ENCODE measurements at regions of chr12 and their contacts with region 1.

Region 1: DNA sequence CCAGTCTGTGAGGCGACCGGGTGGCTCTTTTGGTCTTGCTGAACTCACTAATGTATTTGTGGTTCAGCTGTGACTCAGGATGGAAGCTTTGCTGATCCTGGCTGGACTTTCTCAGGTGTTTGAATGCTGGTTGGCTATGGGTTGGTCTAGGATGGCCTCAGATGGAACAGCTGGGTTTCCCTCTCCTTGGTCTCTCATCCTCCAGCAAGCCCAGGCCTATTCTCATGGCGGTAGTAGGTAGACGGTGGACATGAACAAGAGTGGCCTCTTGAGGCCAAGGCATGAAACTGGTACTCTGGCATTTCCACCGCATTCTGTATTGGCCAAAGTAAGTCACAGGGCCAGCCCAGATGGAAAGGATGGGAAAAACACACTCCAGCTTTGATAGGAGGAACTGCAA is 11.8 kb upstream of the POLR3B start:
- DNase-seq: no peak

Region 2: GRCh38 chr12:105409801-105410471 is 935.8 kb before region 1 on chr12:
- intact Hi-C with region 1: loop called (anchors 10 kb)
- DNase-seq: no peak

Region 3: GRCh38 chr12:106223485-106224354 is 122.0 kb before region 1 on chr12:
- intact Hi-C with region 1: loop called (anchors 2 kb)
- DNase-seq: peak; percentile 91

Region 4: GRCh38 chr12:106247674-106248311 is 97.9 kb before region 1 on chr12 and contains the start of gene CKAP4:
- intact Hi-C with region 1: loop called (anchors 5 kb)
- DNase-seq: peak; percentile 91
- total RNA-seq, gene CKAP4: 56.8 TPM

Region 5: DNA sequence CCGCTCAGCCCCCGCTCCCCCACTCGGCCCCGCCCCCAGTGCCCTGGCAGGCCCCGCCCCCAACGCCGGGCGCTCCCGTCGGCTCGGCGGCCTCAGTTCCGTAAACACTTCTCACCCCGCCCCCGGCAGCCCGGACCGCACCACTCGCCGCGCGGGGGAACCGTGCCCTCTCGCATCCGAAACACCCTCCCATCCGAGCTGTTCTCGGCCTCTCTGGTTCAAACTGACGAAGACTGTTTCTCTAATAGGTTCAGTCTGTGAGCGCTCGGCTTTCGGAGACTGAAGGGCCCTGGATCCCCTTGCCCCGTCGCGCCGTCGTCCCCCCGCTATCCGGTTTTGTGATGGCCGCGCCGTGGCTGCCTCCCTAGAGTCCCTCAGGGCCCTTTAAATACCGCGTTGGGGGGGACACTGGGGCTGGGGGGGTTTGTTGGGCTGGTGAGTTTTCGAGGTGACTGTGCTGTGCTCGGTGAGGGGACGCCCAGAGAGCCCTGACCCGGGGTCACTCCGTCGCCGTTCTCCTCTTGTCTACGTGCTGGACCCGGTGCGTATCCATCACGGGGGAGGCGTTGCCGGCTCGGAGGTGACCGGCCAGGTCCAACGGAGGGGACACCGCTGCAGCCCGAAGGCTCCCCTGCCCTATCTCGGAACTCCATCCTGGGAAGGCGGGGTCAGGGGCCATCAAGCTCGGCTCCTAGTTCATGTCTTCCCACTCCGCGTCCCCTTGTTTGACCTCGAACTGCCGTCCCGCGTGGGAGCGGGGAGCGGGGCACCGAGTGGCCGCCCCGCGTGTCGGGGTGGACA is 43.1 kb before region 1 on chr12 and contains the start of gene TCP11L2:
- intact Hi-C with region 1: loop called (anchors 2 kb)
- DNase-seq: peak; percentile 96
- total RNA-seq, gene TCP11L2: 61.2 TPM